CD4-positive, alpha-beta T cell (primary cell): ENCODE measurements at regions of chr9 and their contacts with region 1.

Region 1: DNA sequence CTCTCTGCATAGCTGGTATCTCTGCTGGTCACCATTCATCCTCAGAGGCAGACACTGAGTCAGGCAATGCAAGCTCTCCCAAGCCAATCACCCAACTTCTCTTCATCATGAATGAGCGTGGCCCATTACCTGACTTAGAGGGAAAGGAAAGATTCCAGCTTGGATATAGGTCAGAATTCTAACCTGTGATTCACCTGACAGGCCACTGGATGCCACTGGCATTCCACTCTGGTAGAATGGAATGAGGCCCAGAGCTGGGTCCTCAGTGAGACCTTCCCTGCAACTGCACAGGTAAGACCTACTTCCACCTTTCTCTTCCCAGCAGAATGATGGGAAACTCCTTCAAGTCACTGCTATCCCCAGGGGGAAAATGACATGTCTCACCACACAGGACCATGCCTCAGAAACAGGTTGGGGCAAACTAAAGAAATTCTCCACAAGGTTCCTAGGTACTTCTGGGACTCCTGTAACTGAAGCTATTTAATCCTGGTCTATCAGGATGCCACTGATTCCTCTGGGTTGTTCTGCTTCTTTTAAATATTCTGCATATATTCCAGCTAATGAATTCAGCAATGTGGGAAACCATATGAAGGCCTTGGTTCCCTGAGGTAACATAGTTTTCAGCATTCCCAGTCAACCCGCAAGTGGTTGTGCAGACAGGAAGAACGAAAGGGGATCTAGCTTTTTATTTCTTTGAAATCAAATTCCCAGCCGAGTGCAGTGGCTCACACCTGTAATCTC is 62.0 kb downstream of the SUSD1 start:
- DNase-seq: peak in 12 of 14 experiments; percentile 2 to 55 (median 10)
- ATAC-seq: peak; percentile 60
- H3K4me3 ChIP-seq: no peak overlapping the region
- H3K4me3 Mint-ChIP-seq: no peak overlapping the region
- H3K27ac ChIP-seq: no peak overlapping the region
- H3K27ac Mint-ChIP-seq: no peak overlapping the region
- H3K4me1 ChIP-seq: no peaks in the 10 kb centered on the region
- H3K4me1 Mint-ChIP-seq: no peaks in the 10 kb centered on the region
- H3K27me3 ChIP-seq: no peaks in the 10 kb centered on the region
- H3K27me3 Mint-ChIP-seq: no peaks in the 10 kb centered on the region
- CTCF ChIP-seq: peak; percentile 65

Region 2: GRCh38 chr9:112361601-112362000 is 248.5 kb after region 1 on chr9:
- CTCF ChIA-PET with region 1: interaction called, 21 read pairs
- POLR2A ChIA-PET with region 1: no interaction called
- intact Hi-C with region 1: loop called (anchors 1 kb)
- DNase-seq: peak in 4 of 14 experiments; percentile 48 to 74 (median 64)
- ATAC-seq: no peak
- H3K4me3 ChIP-seq: no peak overlapping the region
- H3K4me3 Mint-ChIP-seq: no peak overlapping the region
- H3K27ac ChIP-seq: no peak overlapping the region
- H3K27ac Mint-ChIP-seq: no peak overlapping the region
- H3K4me1 ChIP-seq: no peaks in the 10 kb centered on the region
- H3K4me1 Mint-ChIP-seq: peaks cover 4% of the 10 kb centered on the region
- H3K27me3 ChIP-seq: no peaks in the 10 kb centered on the region
- H3K27me3 Mint-ChIP-seq: no peaks in the 10 kb centered on the region
- CTCF ChIP-seq: peak; percentile 86